HEK293T (cell line): ENCODE measurements at regions of chr7 and their contacts with region 1.

Region 1: DNA sequence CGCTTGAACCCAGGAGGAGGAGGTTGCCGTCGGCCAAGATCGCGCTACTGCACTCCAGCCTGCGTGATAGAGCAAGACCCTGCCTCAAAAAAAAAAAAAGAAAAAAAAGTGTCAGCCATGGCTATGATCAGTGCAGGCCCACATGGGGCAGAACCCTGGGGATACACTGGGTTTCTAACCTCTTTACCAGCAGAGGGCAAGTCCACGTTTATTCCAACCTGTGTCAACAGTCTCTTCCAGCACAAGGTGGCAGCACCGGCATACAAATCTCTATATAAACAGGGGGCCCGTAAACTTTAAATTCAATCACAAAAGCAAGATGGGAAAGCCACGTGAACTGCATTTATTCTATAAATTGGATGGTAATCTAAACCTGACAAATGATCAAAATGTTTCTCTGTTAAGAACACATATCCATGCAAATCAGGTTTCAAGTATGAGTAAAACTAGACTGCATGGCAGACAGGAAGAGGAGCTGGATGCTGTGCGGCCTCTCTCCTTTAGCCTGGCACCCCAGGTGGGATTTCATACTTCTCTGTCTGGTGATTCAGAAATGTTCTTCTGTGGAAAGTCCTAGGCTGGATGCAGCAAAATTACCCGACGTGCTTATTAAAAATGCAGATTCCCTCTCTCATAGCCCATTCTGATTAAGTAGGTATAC is 60.0 kb upstream of the STEAP1B start:
- DNase-seq: peak; percentile 74

Region 2: GRCh38 chr7:22726345-22727185 is 166.6 kb after region 1 on chr7:
- CTCF ChIA-PET with region 1: interaction called, 55 read pairs
- POLR2A ChIA-PET with region 1: no interaction called
- DNase-seq: peak; percentile 67

Region 3: GRCh38 chr7:23055582-23056178 is 495.7 kb after region 1 on chr7:
- CTCF ChIA-PET with region 1: interaction called, 16 read pairs
- POLR2A ChIA-PET with region 1: no interaction called
- DNase-seq: peak; percentile 65